ENCODE measurements at regions of chr18 and their contacts with region 1.

Region 1: GRCh38 chr18:38221476-38222100 is 656.0 kb upstream of the CELF4 start:
- DNase-seq: no peak
- ATAC-seq: no peak
- H3K4me3 ChIP-seq: no peak overlapping the region
- H3K4me3 Mint-ChIP-seq: no peak overlapping the region
- H3K27ac ChIP-seq: no peak overlapping the region
- H3K27ac Mint-ChIP-seq: no peak overlapping the region
- H3K4me1 ChIP-seq: no peaks in the 10 kb centered on the region
- H3K4me1 Mint-ChIP-seq: no peaks in the 10 kb centered on the region
- H3K27me3 ChIP-seq: no peaks in the 10 kb centered on the region
- H3K27me3 Mint-ChIP-seq: no peaks in the 10 kb centered on the region
- CTCF ChIP-seq: no peak

Region 2: DNA sequence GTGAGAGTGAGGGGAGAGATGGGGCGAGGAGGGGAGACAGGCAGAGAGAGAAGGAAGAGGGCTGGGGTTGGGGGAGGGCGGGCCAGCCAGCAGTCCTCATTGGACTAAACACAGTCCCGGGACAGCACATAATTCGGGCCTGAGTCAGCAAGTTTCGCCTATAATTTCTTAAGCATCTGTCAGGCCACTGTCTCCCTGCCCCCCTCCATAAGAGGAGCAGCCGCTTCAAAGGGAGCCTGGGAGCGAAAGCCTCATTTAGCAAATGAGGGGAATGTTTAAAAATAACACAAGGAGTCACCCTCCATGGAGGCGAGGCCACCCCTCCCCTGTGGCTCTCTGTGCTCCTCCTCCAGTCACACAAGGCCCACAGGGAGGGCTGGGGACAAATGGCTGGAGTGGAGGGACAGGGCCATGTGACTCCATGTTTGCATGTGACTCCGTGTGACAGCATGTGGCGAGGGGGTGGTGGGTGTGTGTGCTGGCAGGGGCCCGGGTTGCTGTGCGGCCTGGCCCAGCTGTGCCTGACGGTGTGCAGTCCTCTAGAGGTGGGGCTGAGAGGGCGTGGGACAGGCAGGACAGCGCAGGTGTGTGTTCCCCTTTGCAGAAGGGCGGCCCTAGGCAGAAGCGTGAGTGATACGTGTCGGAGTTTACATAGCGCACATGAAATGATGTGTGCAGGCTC is 818.3 kb before region 1 on chr18:
- CTCF ChIA-PET with region 1: no interaction called
- POLR2A ChIA-PET with region 1: no interaction called
- intact Hi-C with region 1: no loop called
- DNase-seq: no peak
- ATAC-seq: no peak
- H3K4me3 ChIP-seq: no peak overlapping the region
- H3K4me3 Mint-ChIP-seq: no peak overlapping the region
- H3K27ac ChIP-seq: no peak overlapping the region
- H3K27ac Mint-ChIP-seq: no peak overlapping the region
- H3K4me1 ChIP-seq: no peaks in the 10 kb centered on the region
- H3K4me1 Mint-ChIP-seq: no peaks in the 10 kb centered on the region
- H3K27me3 ChIP-seq: no peaks in the 10 kb centered on the region
- H3K27me3 Mint-ChIP-seq: no peaks in the 10 kb centered on the region
- CTCF ChIP-seq: no peak

Region 3: DNA sequence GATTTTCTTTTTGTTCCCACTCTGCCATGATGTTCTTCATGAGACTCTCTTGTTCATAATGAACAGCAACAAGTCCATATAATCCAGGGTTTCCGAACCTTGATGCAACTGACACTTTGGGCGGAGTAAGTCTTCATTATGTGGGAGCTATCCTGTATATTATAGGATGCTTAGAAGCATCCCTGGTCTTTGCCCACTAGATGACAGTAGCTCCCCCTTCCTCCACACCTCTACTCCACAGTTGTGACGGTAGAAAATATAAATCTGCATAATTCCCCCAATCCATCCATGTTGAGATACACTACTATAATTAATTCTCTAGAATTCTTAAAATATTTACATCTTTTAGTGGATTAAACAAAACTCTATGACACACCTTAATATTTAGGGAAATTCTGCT is 173.8 kb before region 1 on chr18:
- CTCF ChIA-PET with region 1: no interaction called
- POLR2A ChIA-PET with region 1: no interaction called
- intact Hi-C with region 1: no loop called
- DNase-seq: no peak
- ATAC-seq: no peak
- H3K4me3 ChIP-seq: no peak overlapping the region
- H3K4me3 Mint-ChIP-seq: no peak overlapping the region
- H3K27ac ChIP-seq: no peak overlapping the region
- H3K27ac Mint-ChIP-seq: no peak overlapping the region
- H3K4me1 ChIP-seq: no peaks in the 10 kb centered on the region
- H3K4me1 Mint-ChIP-seq: no peaks in the 10 kb centered on the region
- H3K27me3 ChIP-seq: no peaks in the 10 kb centered on the region
- H3K27me3 Mint-ChIP-seq: no peaks in the 10 kb centered on the region
- CTCF ChIP-seq: no peak

Region 4: GRCh38 chr18:38077229-38077628 is 144.4 kb before region 1 on chr18:
- CTCF ChIA-PET with region 1: no interaction called
- POLR2A ChIA-PET with region 1: no interaction called
- intact Hi-C with region 1: loop called in 1 of 2 experiments (anchors 10 kb)
- DNase-seq: no peak
- ATAC-seq: no peak
- H3K4me3 ChIP-seq: no peak overlapping the region
- H3K4me3 Mint-ChIP-seq: no peak overlapping the region
- H3K27ac ChIP-seq: no peak overlapping the region
- H3K27ac Mint-ChIP-seq: no peak overlapping the region
- H3K4me1 ChIP-seq: no peaks in the 10 kb centered on the region
- H3K4me1 Mint-ChIP-seq: no peaks in the 10 kb centered on the region
- H3K27me3 ChIP-seq: no peaks in the 10 kb centered on the region
- H3K27me3 Mint-ChIP-seq: no peaks in the 10 kb centered on the region
- CTCF ChIP-seq: no peak